ENCODE measurements at regions of chr1 and their contacts with region 1.

Region 1: DNA sequence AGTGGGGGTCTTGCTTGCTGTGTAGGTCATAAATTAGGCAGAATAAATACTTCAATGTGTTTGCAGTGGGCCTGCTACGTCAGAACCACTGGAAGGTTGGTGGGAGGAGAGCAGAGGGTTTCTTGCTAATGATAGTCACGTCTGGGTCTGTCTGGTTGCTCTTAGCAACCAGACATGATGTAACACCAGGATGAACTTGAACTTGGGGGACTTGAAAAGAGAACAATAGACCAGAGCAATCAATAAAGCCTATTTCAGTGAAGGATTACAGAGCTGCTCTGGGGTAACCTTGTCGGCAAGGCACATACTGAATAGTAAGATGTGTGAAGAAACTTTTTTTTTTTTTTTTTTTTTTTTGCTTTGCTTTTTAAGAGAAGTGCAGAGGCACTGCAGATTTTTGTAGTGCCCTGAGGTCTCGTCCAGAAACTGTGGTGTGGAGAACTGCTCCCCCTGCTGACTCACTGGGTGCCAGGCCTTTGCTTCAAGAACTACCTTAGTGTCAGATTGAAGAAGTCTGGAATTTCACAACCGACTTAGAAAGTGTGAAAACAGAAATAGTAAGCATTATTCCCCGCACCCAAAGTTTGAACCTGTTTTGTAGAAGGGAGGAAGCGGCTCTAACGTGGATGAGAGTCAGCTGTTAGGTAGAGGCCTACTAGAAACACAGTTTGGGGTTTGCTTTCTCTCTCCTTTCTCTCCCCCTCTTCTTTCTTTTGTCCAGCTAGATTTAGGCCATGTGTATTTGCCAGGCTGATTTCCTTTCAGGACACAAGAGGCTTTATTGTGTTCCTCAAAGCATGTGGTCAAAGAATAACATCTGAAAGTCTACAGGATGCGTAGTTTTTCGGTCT is 271.6 kb downstream of the TM2D1 start:
- DNase-seq: peak; percentile 48
- H3K4me3 Mint-ChIP-seq: no peak overlapping the region
- H3K27ac Mint-ChIP-seq: no peak overlapping the region
- H3K4me1 Mint-ChIP-seq: peaks cover 8% of the 10 kb centered on the region
- H3K27me3 Mint-ChIP-seq: peaks cover 9% of the 10 kb centered on the region

Region 2: DNA sequence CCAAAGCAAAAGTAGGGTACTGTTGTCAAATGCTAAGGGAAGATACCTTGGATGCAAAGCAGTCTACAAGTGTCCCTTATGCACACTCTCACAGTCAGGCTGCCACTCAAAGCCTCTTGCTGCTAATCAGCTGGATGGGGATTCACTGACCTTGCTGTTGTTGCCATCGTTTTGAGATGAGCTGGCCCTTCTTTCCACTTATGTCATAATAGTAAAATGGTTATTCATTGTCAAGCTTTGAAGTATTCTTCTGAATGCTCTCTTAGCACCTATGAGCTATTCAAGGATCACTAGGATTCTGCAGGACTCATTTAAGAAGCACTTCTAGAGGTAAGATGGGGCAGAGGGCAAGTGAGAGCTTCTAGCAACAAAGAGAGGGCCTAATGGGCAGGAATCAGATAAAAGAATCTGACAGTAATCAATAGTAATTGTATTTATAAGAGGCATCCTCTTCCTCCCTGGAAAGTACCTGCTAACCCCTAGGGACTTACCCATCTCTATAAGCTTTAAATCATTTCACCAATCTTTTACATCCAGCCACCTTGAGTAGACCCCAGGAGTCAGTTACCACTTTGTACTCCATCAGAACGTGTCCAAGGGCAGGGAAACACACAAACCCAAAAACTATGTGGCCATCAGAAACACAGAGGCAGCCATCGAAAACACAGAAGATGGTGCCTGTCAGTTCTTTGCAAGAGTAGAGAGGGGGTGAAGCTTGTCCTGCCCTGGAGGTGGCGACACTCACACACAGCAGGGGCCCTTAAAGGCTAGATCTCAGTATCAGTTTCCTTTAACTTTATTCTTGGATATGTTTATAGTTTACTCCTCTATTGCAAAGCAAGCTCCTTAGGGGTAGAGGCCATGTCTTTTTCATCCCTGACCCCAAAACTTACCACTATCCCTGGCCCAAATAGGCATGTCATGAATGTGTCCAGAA is 474.6 kb before region 1 on chr1:
- intact Hi-C with region 1: loop called (anchors 1 kb)
- DNase-seq: no peak
- H3K4me3 Mint-ChIP-seq: no peak overlapping the region
- H3K27ac Mint-ChIP-seq: no peak overlapping the region
- H3K4me1 Mint-ChIP-seq: no peaks in the 10 kb centered on the region
- H3K27me3 Mint-ChIP-seq: peaks cover 4% of the 10 kb centered on the region

Region 3: DNA sequence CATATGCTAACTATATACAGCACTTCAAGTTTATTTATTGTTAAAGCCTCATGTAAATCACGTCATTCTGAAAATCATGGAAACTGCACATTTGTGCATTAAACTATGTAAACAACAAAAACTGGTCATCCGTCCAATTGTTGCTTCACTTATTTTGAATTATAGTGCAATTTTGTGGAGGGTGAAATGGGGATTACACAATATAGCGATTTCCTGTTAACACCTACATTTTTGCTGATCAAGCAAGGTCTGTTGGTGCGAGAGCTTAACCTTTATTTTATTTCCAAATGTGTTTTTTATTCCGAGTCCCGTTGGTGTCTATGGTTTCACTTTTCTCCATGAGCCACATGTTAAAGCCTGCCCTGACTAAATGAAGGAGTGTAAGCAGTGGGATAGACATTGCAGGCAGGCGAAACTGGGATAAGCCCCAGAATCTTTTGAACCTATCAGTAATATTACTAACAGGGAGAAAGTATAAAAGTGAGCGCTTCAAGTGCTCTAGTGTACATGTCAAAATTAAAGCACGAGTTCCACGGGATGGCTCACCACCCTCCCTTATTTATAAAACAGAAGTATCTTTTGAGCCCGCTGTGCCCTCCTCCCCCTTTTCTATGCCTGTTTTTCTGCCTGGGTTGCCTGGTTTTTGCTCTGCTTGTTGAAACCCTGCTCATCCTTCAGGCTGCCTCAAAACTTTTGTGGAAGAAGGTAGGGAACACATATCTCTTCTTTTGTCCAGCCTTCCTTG is 250.3 kb before region 1 on chr1:
- intact Hi-C with region 1: loop called (anchors 5 kb)
- DNase-seq: no peak
- H3K4me3 Mint-ChIP-seq: no peak overlapping the region
- H3K27ac Mint-ChIP-seq: no peak overlapping the region
- H3K4me1 Mint-ChIP-seq: no peaks in the 10 kb centered on the region
- H3K27me3 Mint-ChIP-seq: peaks cover 17% of the 10 kb centered on the region

Region 4: DNA sequence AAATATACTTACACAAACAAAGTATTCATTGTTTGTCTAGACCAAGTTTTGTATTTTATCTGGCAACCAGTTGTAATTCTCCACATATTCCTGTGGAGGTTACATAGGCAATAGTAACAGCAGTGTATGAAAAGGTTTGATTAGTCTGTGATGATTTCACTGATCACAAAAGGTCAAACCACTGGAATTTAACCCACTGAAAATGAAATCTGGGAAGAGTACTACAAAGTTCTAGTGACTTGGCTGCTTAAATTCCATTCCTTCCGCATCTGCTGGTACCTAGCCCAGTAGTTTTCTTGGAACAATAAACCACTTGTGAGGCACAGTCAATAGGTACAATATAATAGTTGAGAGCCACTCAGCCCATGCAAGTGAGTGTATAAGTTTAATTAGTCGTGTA is 165.6 kb before region 1 on chr1:
- intact Hi-C with region 1: loop called (anchors 10 kb)
- DNase-seq: no peak
- H3K4me3 Mint-ChIP-seq: no peak overlapping the region
- H3K27ac Mint-ChIP-seq: no peak overlapping the region
- H3K4me1 Mint-ChIP-seq: no peaks in the 10 kb centered on the region
- H3K27me3 Mint-ChIP-seq: peaks cover 17% of the 10 kb centered on the region

Region 5: DNA sequence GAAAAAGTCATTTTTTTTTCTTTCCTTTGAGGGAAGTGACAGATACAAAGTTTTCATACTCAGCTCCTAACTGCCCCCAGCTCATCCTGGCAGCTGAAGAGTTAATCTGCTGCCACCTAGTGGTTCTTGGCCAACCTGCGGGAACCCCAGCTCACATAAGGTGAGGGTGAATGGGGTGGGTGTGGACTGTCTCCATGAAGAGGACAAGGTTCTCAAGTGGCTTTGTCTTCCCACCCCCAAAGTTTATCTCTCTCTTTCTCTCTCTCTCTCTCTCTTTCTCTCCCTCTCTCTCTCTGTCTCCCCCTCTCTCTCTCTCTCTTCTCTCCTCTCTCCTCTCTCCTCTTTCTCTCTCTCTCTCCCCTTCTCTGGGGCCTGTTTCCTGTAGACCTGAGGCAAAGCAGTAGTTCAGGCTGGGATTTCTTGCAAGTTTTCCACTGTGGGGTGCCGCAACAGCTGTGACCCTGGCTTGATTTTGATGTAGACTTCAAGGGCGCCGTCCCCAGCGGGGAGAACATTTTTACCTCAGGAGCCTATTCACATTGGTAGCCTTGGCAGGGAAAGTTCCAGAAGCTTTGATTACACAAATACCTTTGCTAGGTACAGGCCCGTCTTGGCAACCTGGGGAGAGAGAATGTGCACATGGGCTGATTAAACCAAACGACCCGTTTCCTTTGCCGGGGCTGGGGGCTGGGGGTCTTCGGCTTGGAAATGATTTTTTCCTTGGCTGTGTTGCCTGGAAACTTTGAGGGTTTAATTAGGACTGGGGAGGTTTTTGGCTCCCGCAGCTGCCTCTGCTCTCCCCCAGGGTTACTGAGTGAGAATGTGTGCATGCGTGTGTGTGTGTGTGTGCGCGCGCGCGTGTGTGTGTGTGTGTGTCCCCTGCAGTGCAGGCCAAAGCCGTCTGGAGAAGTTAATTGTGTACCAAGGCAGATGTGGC is 135.7 kb after region 1 on chr1:
- intact Hi-C with region 1: loop called (anchors 5 kb)
- DNase-seq: peak; percentile 37
- H3K4me3 Mint-ChIP-seq: no peak overlapping the region
- H3K27ac Mint-ChIP-seq: no peak overlapping the region
- H3K4me1 Mint-ChIP-seq: no peaks in the 10 kb centered on the region
- H3K27me3 Mint-ChIP-seq: peaks cover 18% of the 10 kb centered on the region

Region 6: GRCh38 chr1:61851849-61852669 is 398.7 kb after region 1 on chr1:
- intact Hi-C with region 1: loop called (anchors 2 kb)
- DNase-seq: no peak
- H3K4me3 Mint-ChIP-seq: no peak overlapping the region
- H3K27ac Mint-ChIP-seq: no peak overlapping the region
- H3K4me1 Mint-ChIP-seq: no peaks in the 10 kb centered on the region
- H3K27me3 Mint-ChIP-seq: no peaks in the 10 kb centered on the region

Measured in activated T-helper 1 cell treated with anti-CD3 and anti-CD28 coated beads, Interleukin-12 subunit alpha, Interleukin-12 subunit beta, Interleukin-2, Interleukin-4 antibody, amounts not matched to agents 30 ng/mL and 10 ng/mL and 1 ng/mL, durations not matched to agents 14 hours and 24 hours and 36 hours (primary cell).